BJ (cell line): ENCODE measurements at regions of chr22 and their contacts with region 1.

Region 1: DNA sequence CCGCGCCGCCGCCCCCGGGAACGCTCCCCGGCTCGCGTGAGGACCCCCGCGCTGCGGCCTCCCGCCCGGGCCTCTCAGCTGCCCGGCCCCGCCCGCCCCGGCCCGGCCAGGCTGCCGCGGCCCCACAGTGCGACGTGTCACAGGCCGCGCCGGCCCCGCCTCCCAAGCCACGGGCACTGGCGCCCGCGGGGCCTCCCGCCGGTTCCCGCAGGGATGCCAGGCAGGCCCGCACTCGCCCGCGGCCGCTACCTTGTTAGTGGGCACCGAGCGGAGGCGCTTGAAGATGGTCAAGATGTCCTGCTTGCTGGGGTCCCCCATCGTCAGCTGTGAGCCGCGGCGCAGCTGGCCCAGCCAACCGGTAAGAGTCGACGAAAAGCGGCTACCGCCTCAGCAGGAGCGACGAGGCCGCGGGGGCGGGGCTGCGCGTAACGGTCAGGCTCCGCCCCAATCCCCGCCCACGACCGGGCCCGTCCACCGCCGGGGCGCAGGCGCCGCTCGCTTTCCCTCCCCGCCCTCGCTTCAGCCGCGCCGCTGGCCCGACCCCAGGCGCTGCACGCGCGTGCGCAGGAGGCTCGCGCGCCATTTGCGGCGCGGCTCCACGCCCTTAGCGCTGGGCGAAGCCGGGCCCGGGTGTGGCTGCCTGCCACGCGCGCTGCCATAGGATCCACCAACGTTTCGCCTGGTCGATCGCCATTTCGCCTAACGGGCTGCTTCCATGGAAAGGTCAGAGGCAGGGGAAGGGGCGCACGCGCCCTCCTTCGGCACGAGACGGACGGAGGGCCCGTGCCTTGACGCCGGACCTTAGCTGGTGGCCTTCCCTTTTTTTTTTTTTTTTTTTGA is at the start of gene ARFGAP3:
- DNase-seq: peak; percentile 48
- H3K4me3 ChIP-seq: peak within 1 kb of the TSS; percentile 94
- H3K27me3 ChIP-seq: no peaks in the 10 kb centered on the region
- CTCF ChIP-seq: no peak
- polyA plus RNA-seq, gene ARFGAP3: 73.2 and 79.5 TPM in 2 replicates

Region 2: GRCh38 chr22:42758929-42759629 is 98.0 kb before region 1 on chr22:
- CTCF ChIA-PET with region 1: no interaction called
- POLR2A ChIA-PET with region 1: no interaction called
- DNase-seq: no peak
- H3K4me3 ChIP-seq: no peak overlapping the region
- H3K27me3 ChIP-seq: no peaks in the 10 kb centered on the region; the same call in 1 of the 2 replicates
- CTCF ChIP-seq: no peak

Region 3: DNA sequence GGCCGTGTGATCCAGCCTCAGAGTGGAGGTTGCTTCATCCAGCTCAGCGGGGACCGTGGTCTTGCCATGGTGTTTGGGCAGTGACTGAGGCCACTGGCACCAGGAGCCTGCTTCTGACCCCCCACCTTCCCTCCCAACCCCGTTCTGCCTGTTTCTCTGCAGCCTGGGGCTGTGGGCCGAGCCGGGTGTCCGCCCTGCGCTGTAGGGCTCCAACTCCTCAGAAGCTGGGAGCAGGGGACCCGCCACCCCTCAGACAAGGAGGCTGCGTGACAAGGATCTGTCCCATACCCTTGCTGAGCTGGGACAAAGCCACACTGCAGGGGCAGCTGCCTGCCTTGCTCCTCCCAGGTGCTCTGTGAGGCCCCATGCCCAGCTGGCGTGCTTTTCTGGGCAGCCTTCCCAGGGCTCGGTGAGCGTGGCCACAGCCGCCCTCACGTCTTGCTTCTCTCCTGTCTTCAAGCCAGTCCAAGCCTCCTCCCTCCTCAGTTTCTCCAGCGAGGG is 11.7 kb after region 1 on chr22:
- CTCF ChIA-PET with region 1: interaction called, 12 read pairs
- POLR2A ChIA-PET with region 1: no interaction called
- DNase-seq: no peak
- H3K4me3 ChIP-seq: no peak overlapping the region
- H3K27me3 ChIP-seq: no peaks in the 10 kb centered on the region
- CTCF ChIP-seq: no peak

Region 4: DNA sequence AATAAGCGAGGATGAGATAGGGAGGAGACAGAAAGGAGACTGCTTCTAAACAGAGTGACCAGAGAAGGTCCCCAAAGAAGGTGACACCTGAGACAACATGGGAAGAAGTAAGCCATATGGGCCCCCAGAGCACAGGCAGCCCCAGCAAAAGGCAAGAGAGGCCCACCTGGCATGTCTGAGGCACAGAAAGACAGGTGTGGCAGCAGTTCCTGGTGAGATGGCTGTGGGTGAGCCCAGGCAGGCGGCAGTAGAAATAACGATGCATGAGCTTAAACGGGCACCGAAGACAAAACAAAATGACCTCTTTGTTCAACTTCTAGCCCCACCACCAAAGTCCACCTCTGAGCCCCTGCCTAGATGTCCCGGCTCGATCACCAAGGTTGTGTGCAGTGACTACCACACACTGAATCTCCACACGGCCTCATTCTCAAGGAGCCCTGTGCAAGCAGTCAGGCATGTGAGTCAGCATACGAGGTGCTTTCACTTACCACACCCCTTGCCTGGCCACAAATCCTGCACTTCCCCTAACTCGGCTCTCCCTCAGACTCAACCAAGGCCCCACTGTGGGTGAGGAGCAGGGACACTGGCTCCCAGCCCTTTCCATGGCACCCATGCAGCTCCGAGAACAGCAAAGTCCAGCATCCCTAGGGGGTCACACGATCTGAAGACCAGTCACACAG is 80.2 kb after region 1 on chr22:
- CTCF ChIA-PET with region 1: no interaction called
- POLR2A ChIA-PET with region 1: no interaction called
- DNase-seq: no peak
- H3K4me3 ChIP-seq: no peak overlapping the region
- H3K27me3 ChIP-seq: no peaks in the 10 kb centered on the region
- CTCF ChIP-seq: no peak

Region 5: DNA sequence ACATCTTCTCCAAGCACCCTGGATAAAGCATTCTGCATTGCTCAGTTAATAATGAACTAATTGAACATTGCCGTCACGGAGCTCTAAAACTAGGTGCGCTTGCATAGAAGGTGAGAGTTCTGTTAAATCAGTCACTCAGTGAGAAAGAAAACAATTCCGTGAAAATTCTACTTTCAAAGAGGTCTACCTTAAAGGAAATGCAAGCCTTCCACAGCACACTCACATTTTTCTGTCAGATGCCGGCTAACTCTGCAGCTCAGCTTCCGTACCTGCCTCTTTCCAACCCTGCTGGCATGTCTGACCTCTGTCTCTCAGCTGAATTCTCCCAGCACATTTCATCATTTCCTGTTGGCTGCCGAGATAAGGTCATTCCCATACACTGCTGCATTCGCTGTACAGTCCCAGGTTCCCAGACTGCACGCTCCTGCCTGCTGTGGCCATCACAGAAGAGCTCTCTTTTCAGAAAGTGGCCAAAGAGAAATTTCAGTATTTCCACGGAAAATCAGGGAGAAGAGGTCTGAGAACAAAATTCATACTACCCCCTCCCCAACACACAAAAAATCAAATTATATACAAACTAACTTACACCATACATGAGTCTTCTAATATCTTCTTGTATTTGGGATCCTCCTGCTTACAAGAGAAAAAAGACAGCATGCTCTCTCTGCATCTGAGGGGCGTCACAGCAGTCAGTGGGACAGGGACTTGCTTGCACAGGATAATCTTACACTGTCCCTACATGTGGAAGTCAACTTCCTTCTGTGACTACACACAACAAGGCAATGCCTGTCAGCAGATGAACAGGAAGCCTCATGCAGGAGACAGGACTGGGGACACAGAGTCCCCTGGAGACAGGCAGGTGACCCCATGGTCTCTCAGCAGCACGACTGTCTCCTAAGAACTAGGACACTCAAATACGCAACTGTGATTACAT is 102.8 kb after region 1 on chr22:
- CTCF ChIA-PET with region 1: no interaction called
- POLR2A ChIA-PET with region 1: no interaction called
- DNase-seq: no peak
- H3K4me3 ChIP-seq: no peak overlapping the region
- H3K27me3 ChIP-seq: no peaks in the 10 kb centered on the region
- CTCF ChIP-seq: no peak